Lower lobe of right lung (tissue), 2 donors: ENCODE measurements at regions of chr15 and their contacts with region 1.

Region 1: GRCh38 chr15:39580117-39580484 is 778 bp upstream of the THBS1 start:
- DNase-seq: peak; percentile 93
- ATAC-seq: peak; percentile 88 to 94
- H3K4me3 ChIP-seq: peak overlapping the region; percentile 67
- H3K27ac ChIP-seq: peak overlapping the region; percentile 94
- H3K4me1 ChIP-seq: peaks cover 42% of the 10 kb centered on the region
- H3K27me3 ChIP-seq: no peaks in the 10 kb centered on the region
- CTCF ChIP-seq: peak; percentile 94

Region 2: DNA sequence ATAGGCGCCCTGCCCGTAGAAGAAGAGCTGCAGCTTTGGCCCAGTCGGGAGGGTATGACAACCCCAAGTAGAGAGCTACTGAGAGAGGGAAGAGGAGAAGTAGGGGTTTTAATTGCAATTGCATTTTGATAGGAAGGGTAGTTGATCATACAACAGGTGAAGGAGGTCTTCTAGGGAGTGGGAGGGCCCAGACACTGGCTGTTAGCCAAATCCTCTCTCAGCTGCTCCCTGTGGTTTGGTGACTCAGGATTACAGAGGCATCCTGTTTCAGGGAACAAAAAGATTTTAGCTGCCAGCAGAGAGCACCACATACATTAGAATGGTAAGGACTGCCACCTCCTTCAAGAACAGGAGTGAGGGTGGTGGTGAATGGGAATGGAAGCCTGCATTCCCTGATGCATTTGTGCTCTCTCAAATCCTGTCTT is 408.1 kb before region 1 on chr15:
- intact Hi-C with region 1: loop called (anchors 10 kb)
- DNase-seq: peak; percentile 52
- ATAC-seq: peak; percentile 90 to 95
- H3K4me3 ChIP-seq: no peak overlapping the region
- H3K27ac ChIP-seq: peak overlapping the region; percentile 63
- H3K4me1 ChIP-seq: peaks cover 23% of the 10 kb centered on the region
- H3K27me3 ChIP-seq: no peaks in the 10 kb centered on the region
- CTCF ChIP-seq: peak; percentile 42

Region 3: DNA sequence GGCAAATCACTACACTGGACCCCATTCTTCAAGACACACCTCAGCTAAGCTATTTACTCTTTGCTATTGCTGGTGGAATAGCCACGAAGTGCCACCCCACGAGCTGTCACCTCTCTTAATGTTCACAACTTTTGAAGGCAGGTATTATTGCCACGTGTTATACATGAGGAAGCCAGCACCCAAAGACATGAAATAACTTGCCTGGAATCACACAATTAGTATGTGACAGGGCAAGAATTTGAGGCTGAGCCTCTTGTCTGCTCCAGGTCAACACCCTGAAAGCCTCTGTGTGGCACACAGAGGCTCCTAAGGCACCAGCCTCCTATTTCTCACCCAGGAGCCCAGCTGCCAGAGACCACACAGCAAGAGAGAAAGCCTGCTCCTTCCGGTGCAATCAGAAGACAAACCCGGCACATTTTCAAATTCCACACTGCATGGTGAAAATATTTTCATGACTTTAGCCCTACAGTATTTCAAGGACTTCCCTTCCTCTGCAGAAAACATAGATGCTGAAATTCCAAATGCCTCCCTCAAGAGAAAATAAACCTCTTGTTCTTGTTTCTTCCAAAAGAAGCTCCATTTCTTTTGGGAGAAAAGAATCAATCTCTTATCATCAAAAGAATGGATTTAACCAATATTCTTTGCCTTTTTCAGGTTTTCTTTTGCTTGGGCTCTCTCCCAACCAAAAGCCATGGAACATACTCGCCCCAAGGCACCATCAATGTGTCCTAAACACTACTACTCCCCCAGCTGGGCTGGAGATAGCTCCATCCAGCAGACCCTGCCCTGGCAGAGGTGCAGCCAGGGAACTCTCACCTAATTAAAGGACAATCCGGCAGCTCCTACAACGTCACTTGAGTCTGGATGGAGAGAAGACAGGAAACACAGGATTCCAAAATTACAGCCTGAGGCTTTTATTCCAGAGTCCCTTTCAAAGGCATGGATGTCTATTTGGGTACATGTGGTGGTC is 83.9 kb before region 1 on chr15:
- intact Hi-C with region 1: loop called (anchors 10 kb)
- DNase-seq: no peak
- ATAC-seq: no peak
- H3K4me3 ChIP-seq: no peak overlapping the region
- H3K27ac ChIP-seq: no peak overlapping the region
- H3K4me1 ChIP-seq: peaks cover 4% of the 10 kb centered on the region
- H3K27me3 ChIP-seq: no peaks in the 10 kb centered on the region
- CTCF ChIP-seq: no peak

Region 4: GRCh38 chr15:39642011-39642640 is 62.0 kb after region 1 on chr15:
- intact Hi-C with region 1: no loop called
- DNase-seq: no peak
- ATAC-seq: no peak
- H3K4me3 ChIP-seq: no peak overlapping the region
- H3K27ac ChIP-seq: no peak overlapping the region
- H3K4me1 ChIP-seq: no peaks in the 10 kb centered on the region
- H3K27me3 ChIP-seq: no peaks in the 10 kb centered on the region
- CTCF ChIP-seq: no peak